Heart left ventricle (tissue), 16 donors: ENCODE measurements at regions of chrX and their contacts with region 1.

Region 1: DNA sequence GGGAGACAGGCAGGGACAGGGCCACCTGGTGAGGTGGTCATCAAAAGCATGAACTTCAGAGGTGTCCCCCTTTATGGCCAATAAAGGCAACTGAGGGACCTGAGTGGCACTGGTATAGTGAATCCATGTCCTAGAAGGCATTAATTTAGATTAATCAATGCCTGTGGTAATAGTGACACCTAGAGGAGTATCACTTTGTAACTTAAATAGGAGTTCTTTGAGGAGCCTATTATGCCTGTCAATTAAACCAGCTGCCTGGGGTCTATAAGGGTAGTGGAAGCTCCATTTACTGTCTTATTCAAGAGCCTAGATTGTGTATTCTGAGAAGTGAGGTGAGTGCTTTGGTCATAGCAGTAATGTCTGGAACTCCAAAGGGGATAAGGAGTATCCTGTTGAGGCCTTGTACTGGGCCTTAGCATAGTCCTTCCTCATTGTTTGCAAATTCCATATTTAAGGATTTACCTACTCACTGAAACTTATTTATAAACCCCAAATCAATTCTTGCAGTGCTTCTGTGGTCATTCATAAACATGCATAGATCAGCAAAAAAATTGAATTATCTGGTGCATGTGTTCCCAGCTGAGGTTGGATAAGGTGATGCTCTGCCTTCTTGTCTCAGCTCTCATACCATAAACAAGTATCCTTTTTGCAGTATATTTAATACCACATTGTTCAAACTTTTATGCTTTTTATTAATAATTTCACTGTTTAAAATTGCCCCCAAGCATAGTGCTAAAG is 213.8 kb upstream of the RADX start:
- DNase-seq: no peak
- ATAC-seq: peak in 1 of 4 donors; percentile 31
- H3K4me3 ChIP-seq: no peak overlapping the region
- H3K27ac ChIP-seq: no peak overlapping the region
- H3K4me1 ChIP-seq: no peaks in the 10 kb centered on the region
- H3K27me3 ChIP-seq: peaks cover 0 to 10% (median 0%) of the 10 kb centered on the region in 9 donors
- CTCF ChIP-seq: peak in 5 of 12 donors; percentile 9 to 35 (median 22)
- POLR2A ChIP-seq: no peak

Region 2: GRCh38 chrX:105975382-105975781 is 422.6 kb before region 1 on chrX:
- intact Hi-C with region 1: loop called in 8 of 10 experiments (anchors 5 to 10 kb)
- DNase-seq: no peak
- ATAC-seq: no peak
- H3K4me3 ChIP-seq: no peak overlapping the region
- H3K27ac ChIP-seq: no peak overlapping the region
- H3K4me1 ChIP-seq: no peaks in the 10 kb centered on the region
- H3K27me3 ChIP-seq: peaks cover 0 to 18% (median 0%) of the 10 kb centered on the region in 9 donors
- CTCF ChIP-seq: peak in 9 of 12 donors; percentile 16 to 36 (median 27)
- POLR2A ChIP-seq: no peak

Region 3: GRCh38 chrX:106039920-106040319 is 358.1 kb before region 1 on chrX:
- intact Hi-C with region 1: loop called in 1 of 10 experiments (anchors 10 kb)
- DNase-seq: no peak
- ATAC-seq: peak in 1 of 4 donors; percentile 18
- H3K4me3 ChIP-seq: no peak overlapping the region
- H3K27ac ChIP-seq: no peak overlapping the region
- H3K4me1 ChIP-seq: no peaks in the 10 kb centered on the region
- H3K27me3 ChIP-seq: peaks cover 0 to 18% (median 0%) of the 10 kb centered on the region in 9 donors
- CTCF ChIP-seq: peak in 7 of 12 donors; percentile 11 to 30 (median 24)
- POLR2A ChIP-seq: no peak

Region 4: DNA sequence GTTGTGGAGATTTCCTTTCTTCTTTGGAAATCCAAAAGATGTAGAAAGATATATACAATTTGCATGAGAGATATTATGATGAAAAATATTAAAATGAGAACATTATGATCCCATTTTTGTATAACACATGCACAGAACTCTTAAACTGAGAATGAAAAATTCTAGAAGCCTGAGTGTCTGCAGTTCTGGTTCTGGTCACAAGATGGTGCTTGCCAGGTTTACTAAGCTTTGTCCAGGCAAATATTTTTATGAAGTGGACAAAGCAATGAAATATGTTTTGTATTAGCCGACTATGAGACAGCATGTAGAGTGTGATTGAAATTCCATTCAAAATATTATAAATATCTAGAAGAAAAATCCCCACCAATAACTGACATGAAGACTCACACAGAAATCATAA is 227.7 kb before region 1 on chrX:
- intact Hi-C with region 1: loop called in 4 of 10 experiments (anchors 10 kb)
- DNase-seq: no peak
- ATAC-seq: peak in 2 of 4 donors; percentile 36 to 41
- H3K4me3 ChIP-seq: no peak overlapping the region
- H3K27ac ChIP-seq: no peak overlapping the region
- H3K4me1 ChIP-seq: no peaks in the 10 kb centered on the region
- H3K27me3 ChIP-seq: peaks cover 0 to 9% (median 0%) of the 10 kb centered on the region in 9 donors
- CTCF ChIP-seq: peak; percentile 15 to 56 (median 42)
- POLR2A ChIP-seq: no peak